ENCODE measurements at regions of chr19 and their contacts with region 1.

Region 1: GRCh38 chr19:57057036-57057686 is 62.6 kb upstream of the USP29 start:
- DNase-seq: no peak
- H3K4me3 ChIP-seq: peak overlapping the region in 5 of 59 donors; percentile 16 to 31 (median 23)
- H3K27ac ChIP-seq: peak overlapping the region in 20 of 59 donors; percentile 1 to 75 (median 38)
- H3K27me3 ChIP-seq: peaks cover 0 to 10% (median 0%) of the 10 kb centered on the region in 45 donors
- CTCF ChIP-seq: no peak

Region 2: DNA sequence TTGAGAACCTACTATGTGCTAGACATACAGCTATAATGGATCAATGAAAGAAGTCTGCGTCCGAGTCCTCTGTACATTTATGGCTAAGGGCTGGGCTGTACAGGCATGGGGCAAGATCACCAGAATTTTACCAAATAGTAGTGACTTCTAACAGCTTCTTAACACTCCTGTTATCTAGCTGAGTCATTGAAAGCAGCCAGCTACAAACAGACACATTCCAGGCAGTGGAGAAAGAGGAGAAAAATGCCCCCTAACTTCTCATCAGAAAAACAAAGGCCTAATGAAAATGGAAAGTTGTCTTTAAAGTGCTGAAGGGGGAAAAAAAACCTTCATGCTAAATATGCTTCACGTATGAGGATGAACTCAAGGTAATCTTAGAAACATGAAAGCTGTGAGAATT is 565.8 kb before region 1 on chr19:
- intact Hi-C with region 1: loop called in 1 of 2 experiments (anchors 10 kb)
- DNase-seq: no peak
- H3K4me3 ChIP-seq: no peak overlapping the region
- H3K27ac ChIP-seq: no peak overlapping the region
- H3K27me3 ChIP-seq: no peaks in the 10 kb centered on the region
- CTCF ChIP-seq: no peak

Region 3: GRCh38 chr19:57016076-57016475 is 41.1 kb before region 1 on chr19:
- intact Hi-C with region 1: no loop called
- DNase-seq: peak in 9 of 10 donors; percentile 5 to 77 (median 59)
- H3K4me3 ChIP-seq: peak overlapping the region in 24 of 59 donors; percentile 2 to 47 (median 20)
- H3K27ac ChIP-seq: peak overlapping the region in 56 of 59 donors; percentile 34 to 94 (median 82)
- H3K27me3 ChIP-seq: peaks cover 0 to 3% (median 0%) of the 10 kb centered on the region in 45 donors
- CTCF ChIP-seq: no peak

Region 4: GRCh38 chr19:57334191-57334590 is 277.0 kb after region 1 on chr19:
- intact Hi-C with region 1: no loop called
- DNase-seq: no peak
- H3K4me3 ChIP-seq: no peak overlapping the region
- H3K27ac ChIP-seq: no peak overlapping the region
- H3K27me3 ChIP-seq: no peaks in the 10 kb centered on the region
- CTCF ChIP-seq: no peak

Measured in dorsolateral prefrontal cortex (tissue), 120 donors.